ENCODE measurements at regions of chr12 and their contacts with region 1.

Region 1: DNA sequence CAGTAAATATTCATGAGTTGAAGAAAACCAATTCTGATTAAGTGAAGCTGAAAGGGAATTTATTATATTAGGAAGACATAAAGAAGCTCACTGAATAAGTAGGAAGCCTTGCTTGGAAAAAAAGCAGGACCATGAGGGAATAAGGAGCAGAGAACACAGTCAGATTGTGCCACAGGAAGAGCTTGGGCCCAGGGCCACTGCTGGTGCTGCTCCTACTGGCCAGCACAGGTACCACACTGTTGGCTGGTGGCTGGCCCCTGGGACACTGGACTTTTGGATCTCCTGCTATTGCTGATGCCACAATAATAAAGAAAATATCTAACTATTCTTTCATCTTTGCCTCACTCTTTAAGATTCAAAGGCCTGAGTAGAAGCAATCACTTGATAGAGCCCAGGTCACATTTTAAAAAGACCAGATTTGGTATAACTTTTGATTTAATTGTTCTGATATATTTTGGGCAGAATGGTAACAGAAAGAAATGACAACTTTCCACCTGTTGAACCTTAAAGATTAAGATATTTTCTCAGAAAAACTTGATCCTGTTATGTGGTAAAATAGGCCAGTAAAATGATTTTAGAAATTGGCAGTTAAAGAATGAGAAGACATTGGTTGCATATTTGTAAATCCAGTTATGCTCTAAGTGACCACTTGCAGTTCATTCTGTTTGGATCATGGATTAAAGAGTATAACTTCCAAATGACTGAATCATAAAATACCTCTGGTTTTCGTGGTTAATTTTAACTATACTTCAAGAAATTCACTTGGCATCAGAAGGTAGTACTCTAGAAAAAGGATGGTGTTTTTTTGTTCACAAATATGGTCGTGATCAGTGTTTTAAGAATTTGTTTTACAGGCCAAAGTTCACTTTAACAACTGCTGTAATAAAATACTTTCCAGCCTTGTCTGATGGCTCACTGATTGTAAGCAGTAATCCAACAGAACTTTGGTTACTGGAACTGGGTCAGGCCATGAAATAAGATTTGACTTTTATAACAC is 68.3 kb downstream of the DERA start:
- DNase-seq: peak; percentile 37
- H3K4me3 ChIP-seq: no peak overlapping the region
- H3K27ac ChIP-seq: no peak overlapping the region
- H3K4me1 ChIP-seq: peaks cover 9% of the 10 kb centered on the region
- H3K27me3 ChIP-seq: no peaks in the 10 kb centered on the region
- CTCF ChIP-seq: peak; percentile 62 to 65

Region 2: GRCh38 chr12:16359512-16360491 is 380.4 kb after region 1 on chr12:
- CTCF ChIA-PET with region 1: no interaction called
- dilution Hi-C with region 1: no loop called
- in situ Hi-C with region 1: no loop called
- intact Hi-C with region 1: loop called (anchors 5 kb)
- DNase-seq: peak; percentile 25
- H3K4me3 ChIP-seq: no peak overlapping the region
- H3K27ac ChIP-seq: no peak overlapping the region
- H3K4me1 ChIP-seq: no peaks in the 10 kb centered on the region
- H3K27me3 ChIP-seq: no peaks in the 10 kb centered on the region
- CTCF ChIP-seq: peak; percentile 83 to 87

Region 3: DNA sequence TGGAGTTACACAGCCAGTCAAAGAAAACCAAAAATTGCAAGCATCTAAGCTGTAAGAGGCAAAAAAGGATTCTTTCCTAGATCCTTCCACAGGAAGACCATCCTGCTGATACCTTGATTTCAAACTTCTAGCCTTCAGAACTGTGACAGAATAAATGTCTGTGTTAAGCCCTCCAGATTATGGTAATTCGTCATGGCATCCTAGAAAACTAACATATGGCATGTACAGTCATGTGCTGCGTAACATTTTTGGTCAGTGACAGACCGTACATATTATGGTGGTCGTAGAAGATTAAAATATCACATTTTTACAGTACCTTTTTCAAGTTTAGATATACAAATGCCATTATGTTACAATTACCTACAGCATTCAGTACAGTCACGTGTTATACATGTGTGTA is 1287.5 kb after region 1 on chr12:
- CTCF ChIA-PET with region 1: no interaction called
- dilution Hi-C with region 1: no loop called
- in situ Hi-C with region 1: no loop called
- intact Hi-C with region 1: no loop called
- DNase-seq: no peak
- H3K4me3 ChIP-seq: no peak overlapping the region
- H3K27ac ChIP-seq: no peak overlapping the region
- H3K4me1 ChIP-seq: no peaks in the 10 kb centered on the region
- H3K27me3 ChIP-seq: no peaks in the 10 kb centered on the region
- CTCF ChIP-seq: no peak

Measured in mammary epithelial cell (primary cell).